Naive thymus-derived CD8-positive, alpha-beta T cell (primary cell): ENCODE measurements at regions of chr7 and their contacts with region 1.

Region 1: GRCh38 chr7:107168233-107169119 is at the start of gene HBP1:
- DNase-seq: peak; percentile 85 to 100 (median 98)
- ATAC-seq: peak; percentile 79 to 83
- H3K4me3 Mint-ChIP-seq: peak within 1 kb of the TSS; percentile 92 to 99 (median 96)
- H3K27ac Mint-ChIP-seq: peak within 1 kb of the TSS; percentile 98 to 100 (median 99)
- H3K4me1 Mint-ChIP-seq: peaks cover 14 to 53% (median 36%) of the 10 kb centered on the region in 4 donors
- H3K27me3 Mint-ChIP-seq: peaks cover 0 to 6% (median 0%) of the 10 kb centered on the region in 5 donors
- polyA plus RNA-seq, gene HBP1: 49.6 to 55.6 (median 50.3) TPM

Region 2: GRCh38 chr7:106285051-106285854 is 883.2 kb before region 1 on chr7:
- POLR2A ChIA-PET with region 1: interaction called, 19 read pairs
- DNase-seq: peak; percentile 89 to 99 (median 96)
- ATAC-seq: peak; percentile 85 to 88
- H3K4me3 Mint-ChIP-seq: peak overlapping the region; percentile 89 to 98 (median 96)
- H3K27ac Mint-ChIP-seq: peak overlapping the region; percentile 78 to 99 (median 98)
- H3K4me1 Mint-ChIP-seq: peaks cover 8 to 41% (median 27%) of the 10 kb centered on the region in 4 donors
- H3K27me3 Mint-ChIP-seq: no peaks in the 10 kb centered on the region

Region 3: GRCh38 chr7:107130487-107131225 is 37.8 kb before region 1 on chr7:
- POLR2A ChIA-PET with region 1: interaction called, 28 read pairs
- DNase-seq: no peak
- ATAC-seq: no peak
- H3K4me3 Mint-ChIP-seq: no peak overlapping the region
- H3K27ac Mint-ChIP-seq: no peak overlapping the region
- H3K4me1 Mint-ChIP-seq: peaks cover 10 to 24% (median 16%) of the 10 kb centered on the region in 4 donors
- H3K27me3 Mint-ChIP-seq: peaks cover 0 to 2% (median 0%) of the 10 kb centered on the region in 5 donors

Region 4: GRCh38 chr7:107180378-107180777 is 11.9 kb after region 1 on chr7:
- POLR2A ChIA-PET with region 1: interaction called, 44 read pairs
- DNase-seq: peak in 5 of 10 donors; percentile 34 to 77 (median 46)
- ATAC-seq: peak; percentile 59 to 83
- H3K4me3 Mint-ChIP-seq: peak overlapping the region in 9 of 10 donors; percentile 3 to 72 (median 30)
- H3K27ac Mint-ChIP-seq: peak overlapping the region in 7 of 10 donors; percentile 0 to 82 (median 68)
- H3K4me1 Mint-ChIP-seq: peaks cover 26 to 67% (median 56%) of the 10 kb centered on the region in 4 donors
- H3K27me3 Mint-ChIP-seq: no peaks in the 10 kb centered on the region

Region 5: DNA sequence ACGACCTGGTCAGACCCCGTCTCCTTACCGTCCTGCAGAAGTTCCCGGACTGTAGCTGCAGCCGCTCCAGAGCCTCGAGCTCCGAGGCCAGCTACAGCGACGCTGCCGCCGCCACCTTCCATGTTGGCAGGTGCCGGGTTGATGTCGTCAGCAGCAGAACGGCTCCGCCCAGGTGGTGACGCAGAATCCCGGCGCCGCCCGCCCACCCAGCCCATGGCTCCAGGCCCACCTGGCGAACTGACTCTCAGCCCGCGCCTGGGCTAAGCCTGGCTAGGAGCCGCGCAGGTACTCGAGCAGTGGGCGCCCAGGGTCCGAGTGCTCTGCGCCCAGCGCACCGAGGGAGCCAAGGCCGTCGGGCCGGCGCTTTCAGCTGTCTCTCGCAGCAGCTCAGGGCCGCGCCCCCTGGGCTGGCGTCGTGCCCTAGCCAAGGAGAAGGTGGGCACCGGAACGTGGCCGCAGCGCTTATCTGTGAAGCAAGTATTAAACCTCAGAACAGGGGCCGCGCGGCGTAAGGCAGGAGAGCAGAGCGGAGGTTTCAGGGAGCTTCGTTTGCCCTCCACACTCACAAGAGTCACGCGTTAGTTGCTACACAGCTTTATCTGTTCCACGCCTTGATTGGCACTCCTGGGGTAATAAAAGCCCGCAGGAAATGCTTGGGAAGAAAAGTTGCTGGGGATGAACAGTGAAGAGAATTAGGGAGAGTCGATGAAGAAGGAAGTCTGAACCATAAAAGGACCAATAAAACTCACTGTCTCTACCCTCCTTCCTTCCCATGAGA is 395.5 kb after region 1 on chr7 and contains the starts of genes COG5 and DUS4L:
- POLR2A ChIA-PET with region 1: interaction called, 21 read pairs
- DNase-seq: peak; percentile 79 to 90 (median 83)
- ATAC-seq: peak; percentile 84 to 85
- H3K4me3 Mint-ChIP-seq: peak within 1 kb of the TSS; percentile 85 to 95 (median 90)
- H3K27ac Mint-ChIP-seq: peak within 1 kb of the TSS; percentile 92 to 98 (median 96)
- H3K4me1 Mint-ChIP-seq: peaks cover 40 to 62% (median 59%) of the 10 kb centered on the region in 4 donors
- H3K27me3 Mint-ChIP-seq: no peaks in the 10 kb centered on the region
- polyA plus RNA-seq, gene COG5: 24.3 to 30.9 (median 29.6) TPM
- polyA plus RNA-seq, gene DUS4L: 5.6 to 9.5 (median 9.0) TPM

Region 6: GRCh38 chr7:107890962-107891635 is 722.6 kb after region 1 on chr7 and contains the start of gene DLD:
- POLR2A ChIA-PET with region 1: interaction called, 13 read pairs
- DNase-seq: peak; percentile 87 to 96 (median 94)
- ATAC-seq: peak; percentile 97
- H3K4me3 Mint-ChIP-seq: peak within 1 kb of the TSS; percentile 95 to 100 (median 97)
- H3K27ac Mint-ChIP-seq: peak within 1 kb of the TSS; percentile 98 to 100 (median 99)
- H3K4me1 Mint-ChIP-seq: peaks cover 30 to 54% (median 51%) of the 10 kb centered on the region in 4 donors
- H3K27me3 Mint-ChIP-seq: peaks cover 0 to 2% (median 0%) of the 10 kb centered on the region in 5 donors
- polyA plus RNA-seq, gene DLD: 70.1 to 72.1 (median 71.4) TPM